A549 (cell line): ENCODE measurements at regions of chr19 and their contacts with region 1.

Region 1: DNA sequence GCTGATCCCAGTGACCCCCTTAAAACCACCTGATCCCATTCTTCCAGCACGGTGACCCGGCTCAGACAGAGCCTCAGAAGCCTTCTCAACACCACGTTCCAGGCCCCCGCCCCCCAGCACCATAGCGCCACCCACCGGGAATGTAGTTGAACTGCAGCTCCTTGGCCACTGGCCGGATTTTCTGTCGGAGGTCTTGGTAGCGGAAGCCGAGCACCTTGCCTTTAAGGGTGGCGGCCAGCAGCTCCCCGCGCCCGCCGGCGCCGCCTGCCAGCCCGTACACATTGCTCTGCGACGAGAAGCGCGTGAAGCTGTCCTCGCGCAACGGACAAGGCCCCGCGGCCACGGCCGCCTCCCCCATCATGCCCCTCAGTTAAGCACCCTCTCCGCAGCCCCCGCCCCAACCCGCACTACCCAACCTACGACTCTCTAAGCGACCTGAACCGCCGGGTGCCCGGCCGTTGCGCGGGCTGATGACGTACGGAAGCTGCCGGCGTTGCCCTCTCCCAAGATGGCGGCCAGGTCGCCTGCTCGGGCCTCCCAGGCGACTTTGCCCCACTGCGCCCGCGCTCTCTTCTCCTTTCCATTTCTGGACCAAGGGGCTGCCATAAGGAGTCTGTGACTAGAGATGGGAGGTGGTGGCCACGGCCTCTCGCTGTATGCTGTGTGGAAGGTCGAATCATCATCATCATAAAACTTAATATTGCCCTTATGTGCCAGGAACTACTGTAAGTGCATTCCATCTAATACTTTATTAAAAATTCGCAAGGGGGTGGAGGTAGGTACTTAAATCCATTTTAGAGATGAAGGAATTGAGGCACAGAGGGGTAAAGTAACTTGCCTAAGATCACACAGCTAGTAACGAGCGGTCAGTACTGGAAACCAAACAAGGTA is at the start of gene KPTN:
- DNase-seq: peak; percentile 96 to 99
- ATAC-seq: peak; percentile 84 to 90
- H3K4me3 ChIP-seq: peak within 1 kb of the TSS; percentile 53
- H3K27ac ChIP-seq: peak within 1 kb of the TSS; percentile 96 to 97
- H3K4me1 ChIP-seq: peaks cover 12% of the 10 kb centered on the region; the same call in 2 of the 3 replicates
- CTCF ChIP-seq: peak; percentile 98
- EP300 ChIP-seq: no peak
- POLR2A ChIP-seq: peak; percentile 88
- RAD21 ChIP-seq: peak; percentile 70 to 75
- polyA plus RNA-seq, gene KPTN: 10.6 and 12.5 TPM in 2 replicates

Region 2: GRCh38 chr19:47370045-47370611 is 113.9 kb before region 1 on chr19:
- CTCF ChIA-PET with region 1: no interaction called
- POLR2A ChIA-PET with region 1: no interaction called
- DNase-seq: no peak
- ATAC-seq: peak; percentile 12 to 35; a peak in 1 of 6 replicates
- H3K4me3 ChIP-seq: no peak overlapping the region
- H3K27ac ChIP-seq: 0 out of 6 replicates have a peak overlapping the region, but pooled peaks of 1 of the 2 experiments have one; percentile 14
- H3K4me1 ChIP-seq: peaks cover 7% of the 10 kb centered on the region; the same call in 1 of the 3 replicates
- CTCF ChIP-seq: no peak
- EP300 ChIP-seq: no peak
- POLR2A ChIP-seq: no peak
- RAD21 ChIP-seq: no peak

Region 3: GRCh38 chr19:47447470-47448359 is 36.3 kb before region 1 on chr19:
- CTCF ChIA-PET with region 1: interaction called, 16 read pairs
- POLR2A ChIA-PET with region 1: interaction called, 4 read pairs
- DNase-seq: peak; percentile 67 to 92
- ATAC-seq: peak; percentile 54 to 72
- H3K4me3 ChIP-seq: peak overlapping the region; percentile 50
- H3K27ac ChIP-seq: peak overlapping the region; percentile 46 to 51; a peak in 5 of 6 replicates
- H3K4me1 ChIP-seq: peaks cover 26% of the 10 kb centered on the region
- CTCF ChIP-seq: no peak
- EP300 ChIP-seq: no peak
- POLR2A ChIP-seq: no peak
- RAD21 ChIP-seq: no peak

Region 4: DNA sequence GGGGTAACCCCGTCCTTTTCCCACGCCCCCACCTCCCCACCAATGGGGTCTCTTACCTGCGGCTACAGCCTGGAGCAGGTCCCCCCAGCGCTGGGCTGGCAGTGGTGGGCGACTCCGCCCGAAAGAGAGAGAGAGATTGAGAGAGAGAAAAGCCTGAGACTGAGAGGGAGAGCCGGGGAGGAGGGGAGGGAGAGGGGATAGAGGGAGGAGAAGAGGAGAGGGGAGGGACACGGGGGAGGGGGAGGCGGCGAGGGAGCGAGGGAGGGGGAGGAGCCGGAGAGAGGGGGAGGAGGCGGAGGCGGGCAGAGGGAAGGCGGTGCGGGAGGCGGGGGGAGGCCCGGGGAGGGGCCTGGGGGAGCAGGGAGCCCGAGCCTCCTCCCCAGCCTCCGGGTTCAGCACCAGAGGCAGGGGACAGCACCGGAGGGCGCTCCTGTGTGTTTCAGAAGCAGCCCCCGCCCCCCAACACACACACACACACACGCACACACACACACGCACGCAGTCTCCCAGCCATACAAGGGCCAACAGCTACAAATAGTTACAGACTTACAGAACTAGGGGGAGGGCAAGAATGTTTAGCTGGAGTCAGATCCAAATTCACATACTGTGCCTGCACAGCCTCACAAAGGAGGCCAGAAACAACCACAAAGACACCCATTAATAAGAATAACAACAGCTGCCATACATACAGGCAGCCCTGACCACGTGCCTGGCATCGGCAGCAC is 12.2 kb before region 1 on chr19 and contains the start of gene SLC8A2:
- CTCF ChIA-PET with region 1: interaction called, 31 read pairs
- POLR2A ChIA-PET with region 1: interaction called, 4 read pairs
- DNase-seq: peak; percentile 75 to 76
- ATAC-seq: peak; percentile 17 to 56; a peak in 5 of 6 replicates
- H3K4me3 ChIP-seq: peak within 1 kb of the TSS; percentile 41
- H3K27ac ChIP-seq: peak within 1 kb of the TSS in 1 of 2 experiments; percentile 69; a peak in 2 of 6 replicates
- H3K4me1 ChIP-seq: peaks cover 19% of the 10 kb centered on the region; the same call in 2 of the 3 replicates
- CTCF ChIP-seq: no peak
- EP300 ChIP-seq: no peak
- POLR2A ChIP-seq: no peak
- RAD21 ChIP-seq: no peak
- polyA plus RNA-seq, gene SLC8A2: 0.12 and 0.35 TPM in 2 replicates

Region 5: DNA sequence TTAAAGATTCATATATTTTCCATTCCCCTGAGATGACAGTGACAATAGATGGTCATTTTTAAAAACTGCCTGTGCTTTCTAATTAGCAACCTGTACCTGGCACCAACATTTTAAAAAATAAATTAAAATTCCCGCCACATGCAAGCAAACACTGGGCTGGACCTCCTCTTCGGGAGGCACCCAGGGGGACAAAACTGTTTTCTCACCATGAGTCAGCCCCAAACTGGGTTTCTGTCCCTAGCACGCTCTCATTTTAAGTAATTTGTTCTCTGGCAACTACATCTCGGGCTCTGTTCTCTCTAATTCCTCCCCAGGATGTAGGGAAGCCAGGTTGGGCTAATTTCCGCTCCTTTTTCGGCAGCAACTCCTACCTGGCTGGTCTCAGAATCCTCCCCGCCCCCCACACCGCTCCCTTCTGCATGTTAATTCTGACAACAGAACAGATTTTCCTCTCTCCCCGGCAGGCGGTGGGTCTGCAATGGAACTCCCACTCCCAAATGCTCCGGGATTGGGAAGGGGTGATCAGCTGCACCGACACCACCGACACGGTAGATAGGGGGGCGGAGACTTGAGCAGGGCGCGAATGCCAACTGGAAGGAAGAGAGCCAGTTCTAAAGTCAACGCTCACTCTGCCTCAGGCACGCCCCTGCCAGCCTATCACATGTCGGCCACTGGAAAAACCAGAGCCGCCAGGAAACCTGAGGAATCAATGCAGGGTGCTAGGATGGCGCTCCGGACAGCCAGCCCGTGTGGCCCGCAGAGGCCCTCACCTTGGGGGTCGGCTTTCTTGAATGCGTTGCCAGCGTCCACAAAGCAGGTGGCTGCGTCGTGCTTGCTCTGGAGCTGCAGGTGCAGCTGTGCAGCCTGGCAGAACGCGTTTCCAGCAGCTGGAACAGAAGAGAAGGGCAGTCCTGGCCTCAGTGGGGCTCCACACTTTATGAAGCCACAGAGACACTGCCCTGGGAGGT is 16.1 kb after region 1 on chr19:
- CTCF ChIA-PET with region 1: interaction called, 58 read pairs
- POLR2A ChIA-PET with region 1: interaction called, 7 read pairs
- DNase-seq: no peak
- ATAC-seq: no peak
- H3K4me3 ChIP-seq: no peak overlapping the region
- H3K27ac ChIP-seq: no peak overlapping the region
- H3K4me1 ChIP-seq: no peaks in the 10 kb centered on the region
- CTCF ChIP-seq: no peak
- EP300 ChIP-seq: no peak
- POLR2A ChIP-seq: no peak
- RAD21 ChIP-seq: no peak